ENCODE measurements at regions of chr2 and their contacts with region 1.

Region 1: GRCh38 chr2:119879502-119879901 is 119.8 kb downstream of the PTPN4 start:
- DNase-seq: no peak
- ATAC-seq: no peak
- H3K4me3 ChIP-seq: no peak overlapping the region
- H3K27ac ChIP-seq: no peak overlapping the region
- H3K4me1 ChIP-seq: no peaks in the 10 kb centered on the region
- H3K27me3 ChIP-seq: no peaks in the 10 kb centered on the region
- CTCF ChIP-seq: no peak

Region 2: GRCh38 chr2:119647440-119648169 is 231.9 kb before region 1 on chr2:
- CTCF ChIA-PET with region 1: no interaction called
- POLR2A ChIA-PET with region 1: no interaction called
- in situ Hi-C with region 1: no loop called
- intact Hi-C with region 1: no loop called
- DNase-seq: no peak
- ATAC-seq: no peak
- H3K4me3 ChIP-seq: no peak overlapping the region
- H3K27ac ChIP-seq: no peak overlapping the region
- H3K4me1 ChIP-seq: no peaks in the 10 kb centered on the region
- H3K27me3 ChIP-seq: peaks cover 8% of the 10 kb centered on the region; the same call in 1 of the 2 replicates
- CTCF ChIP-seq: no peak

Region 3: GRCh38 chr2:119759451-119760236 is 119.9 kb before region 1 on chr2 and contains the start of gene PTPN4:
- CTCF ChIA-PET with region 1: no interaction called
- POLR2A ChIA-PET with region 1: no interaction called
- in situ Hi-C with region 1: no loop called
- intact Hi-C with region 1: no loop called
- DNase-seq: peak; percentile 76
- ATAC-seq: peak; percentile 97
- H3K4me3 ChIP-seq: peak within 1 kb of the TSS; percentile 72 to 92
- H3K27ac ChIP-seq: peak within 1 kb of the TSS; percentile 96
- H3K4me1 ChIP-seq: peaks cover 22% of the 10 kb centered on the region
- H3K27me3 ChIP-seq: no peaks in the 10 kb centered on the region
- CTCF ChIP-seq: no peak
- total RNA-seq, gene PTPN4: 45.9 TPM

Region 4: GRCh38 chr2:120060088-120060623 is 180.7 kb after region 1 on chr2:
- CTCF ChIA-PET with region 1: no interaction called
- POLR2A ChIA-PET with region 1: interaction called, 17 read pairs
- in situ Hi-C with region 1: no loop called
- intact Hi-C with region 1: no loop called
- DNase-seq: no peak
- ATAC-seq: no peak
- H3K4me3 ChIP-seq: no peak overlapping the region
- H3K27ac ChIP-seq: no peak overlapping the region
- H3K4me1 ChIP-seq: peaks cover 13% of the 10 kb centered on the region
- H3K27me3 ChIP-seq: no peaks in the 10 kb centered on the region
- CTCF ChIP-seq: no peak

Measured in Panc1 (cell line).